Activated CD4-positive, alpha-beta T cell treated with anti-CD3 and anti-CD28 coated beads, Interleukin-2, amount 10 ng/mL, durations not matched to agents 7 days and 5 days (primary cell): ENCODE measurements at regions of chrX and their contacts with region 1.

Region 1: GRCh38 chrX:110412971-110413721 is 54.5 kb downstream of the RTL9 start:
- DNase-seq: peak; percentile 66
- H3K4me3 Mint-ChIP-seq: no peak overlapping the region
- H3K27ac Mint-ChIP-seq: no peak overlapping the region
- H3K4me1 Mint-ChIP-seq: peaks cover 3% of the 10 kb centered on the region
- H3K27me3 Mint-ChIP-seq: no peaks in the 10 kb centered on the region

Region 2: DNA sequence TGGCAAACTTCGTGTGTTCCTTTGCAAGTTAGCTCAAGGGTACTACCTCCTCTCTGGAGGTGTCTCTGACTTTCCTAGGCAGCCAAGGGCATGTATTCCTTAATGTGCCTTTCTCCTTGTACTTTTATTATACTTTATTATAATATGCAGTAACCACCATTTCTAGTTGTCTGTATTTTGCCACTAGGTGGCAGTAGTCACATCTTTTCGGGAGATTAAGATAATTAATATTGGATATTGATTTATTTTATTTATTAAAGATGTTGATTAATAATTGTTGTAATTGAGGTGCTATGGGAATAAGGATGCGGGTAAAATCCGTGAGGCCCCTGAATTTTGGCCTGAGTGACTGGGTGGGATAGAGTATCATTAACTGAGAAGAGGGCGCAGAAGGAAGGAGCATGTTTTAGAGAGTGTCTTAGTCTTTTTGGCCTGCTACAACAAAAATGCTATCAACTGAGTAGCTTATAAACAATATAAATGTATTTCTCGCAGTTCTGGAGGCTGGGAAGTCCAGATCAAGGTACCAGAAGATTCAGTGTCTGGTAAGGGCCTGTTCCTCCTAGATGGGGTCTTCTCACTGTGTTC is 256.9 kb before region 1 on chrX:
- CTCF ChIA-PET with region 1: interaction called, 48 read pairs
- POLR2A ChIA-PET with region 1: no interaction called
- DNase-seq: peak; percentile 11
- H3K4me3 Mint-ChIP-seq: no peak overlapping the region
- H3K27ac Mint-ChIP-seq: no peak overlapping the region
- H3K4me1 Mint-ChIP-seq: peaks cover 12% of the 10 kb centered on the region
- H3K27me3 Mint-ChIP-seq: no peaks in the 10 kb centered on the region

Region 3: GRCh38 chrX:110286136-110286535 is 127.0 kb before region 1 on chrX:
- CTCF ChIA-PET with region 1: no interaction called
- POLR2A ChIA-PET with region 1: no interaction called
- DNase-seq: no peak
- H3K4me3 Mint-ChIP-seq: no peak overlapping the region
- H3K27ac Mint-ChIP-seq: no peak overlapping the region
- H3K4me1 Mint-ChIP-seq: peaks cover 2% of the 10 kb centered on the region
- H3K27me3 Mint-ChIP-seq: no peaks in the 10 kb centered on the region

Region 4: DNA sequence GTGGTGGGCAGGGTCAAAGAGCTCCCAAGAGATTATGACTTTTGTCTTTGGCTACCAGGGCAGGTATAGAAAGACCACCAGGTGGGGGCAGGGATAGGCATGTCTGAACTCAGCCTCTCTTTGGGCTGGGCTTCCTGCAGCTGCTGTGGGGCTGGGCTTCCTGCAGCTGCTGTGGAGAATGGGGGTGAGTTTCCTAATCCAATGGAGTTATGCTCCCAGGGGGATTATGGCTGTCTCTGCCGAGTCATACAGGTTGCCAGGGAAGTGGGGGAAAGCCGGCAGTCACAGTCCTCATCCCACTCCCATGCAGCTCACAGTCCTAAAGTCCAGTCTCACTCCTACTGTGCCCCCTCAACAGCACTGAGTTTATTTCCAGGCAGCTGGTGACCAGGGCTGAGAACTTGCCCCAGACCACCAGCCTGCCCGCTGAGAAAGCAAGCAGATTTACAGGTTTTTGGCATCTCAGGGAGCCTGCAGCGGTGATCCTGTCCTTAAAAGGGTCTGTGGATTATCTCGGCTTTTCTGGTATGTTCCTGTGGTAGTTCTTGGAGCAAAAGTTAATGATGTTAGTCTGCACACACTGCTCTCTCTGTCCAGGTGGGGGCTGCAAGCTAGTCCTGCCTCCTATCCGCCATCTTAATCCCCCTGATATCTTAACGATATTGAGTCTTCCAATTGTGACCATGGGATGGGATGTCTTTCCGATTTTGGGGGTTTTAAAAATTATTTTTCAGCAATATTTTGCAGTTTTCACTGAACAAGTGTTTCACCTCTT is 78.9 kb after region 1 on chrX:
- CTCF ChIA-PET with region 1: no interaction called
- POLR2A ChIA-PET with region 1: no interaction called
- DNase-seq: no peak
- H3K4me3 Mint-ChIP-seq: no peak overlapping the region
- H3K27ac Mint-ChIP-seq: no peak overlapping the region
- H3K4me1 Mint-ChIP-seq: no peaks in the 10 kb centered on the region
- H3K27me3 Mint-ChIP-seq: no peaks in the 10 kb centered on the region